HCT116 (cell line): ENCODE measurements at regions of chr22 and their contacts with region 1.

Region 1: GRCh38 chr22:29040385-29041275 is 21.0 kb downstream of the C22orf31 start:
- DNase-seq: peak; percentile 73
- ATAC-seq: peak; percentile 88
- H3K4me3 ChIP-seq: no peak overlapping the region
- H3K27ac ChIP-seq: no peak overlapping the region
- H3K4me1 ChIP-seq: peaks cover 25 to 34% of the 10 kb centered on the region in 2 experiments
- H3K27me3 ChIP-seq: no peaks in the 10 kb centered on the region
- CTCF ChIP-seq: peak; percentile 84 to 99 (median 96)
- POLR2A ChIP-seq: no peak
- RAD21 ChIP-seq: peak; percentile 91

Region 2: GRCh38 chr22:28600546-28601143 is 440.0 kb before region 1 on chr22:
- CTCF ChIA-PET with region 1: interaction called, 29 read pairs
- POLR2A ChIA-PET with region 1: no interaction called
- RAD21 ChIA-PET with region 1: interaction called in 1 of 2 experiments, 4 read pairs
- intact Hi-C with region 1: loop called (anchors 2 kb)
- DNase-seq: peak; percentile 24
- ATAC-seq: peak; percentile 58
- H3K4me3 ChIP-seq: no peak overlapping the region
- H3K27ac ChIP-seq: no peak overlapping the region
- H3K4me1 ChIP-seq: no peaks in the 10 kb centered on the region
- H3K27me3 ChIP-seq: no peaks in the 10 kb centered on the region
- CTCF ChIP-seq: peak; percentile 12 to 53 (median 52); a peak in 4 of 6 replicates
- POLR2A ChIP-seq: no peak
- RAD21 ChIP-seq: peak; percentile 74

Region 3: DNA sequence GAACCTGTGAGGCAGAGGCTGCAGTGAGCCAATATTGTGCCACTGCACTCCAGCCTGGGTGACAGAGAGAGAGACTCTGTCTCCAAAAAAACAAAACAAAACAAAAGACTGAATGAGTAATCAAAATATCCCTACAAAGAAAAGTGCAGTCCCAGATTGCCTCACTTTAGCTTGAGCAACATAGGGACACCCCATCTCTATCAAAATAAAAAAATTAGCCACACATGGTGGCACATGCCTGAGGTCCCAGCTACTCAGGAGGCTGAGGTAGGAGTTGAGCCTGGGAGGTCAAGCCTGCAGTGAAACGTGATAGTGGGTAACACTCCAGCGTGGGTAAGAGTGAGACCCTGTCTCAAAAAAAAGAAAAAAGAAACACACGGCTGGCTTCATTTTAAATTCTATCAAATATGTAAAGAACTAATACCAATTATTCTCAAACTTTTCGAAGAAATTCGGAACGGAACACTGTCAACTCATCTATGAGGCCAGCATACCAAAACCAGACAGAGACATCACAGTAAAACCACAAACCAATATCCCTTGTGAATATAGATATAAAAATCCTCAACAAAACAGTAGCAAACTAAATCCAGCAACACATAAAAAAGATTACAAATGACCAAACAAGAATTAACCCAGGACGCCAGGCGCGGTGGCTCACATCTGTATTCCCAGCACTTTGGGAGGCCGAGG is 311.9 kb before region 1 on chr22:
- CTCF ChIA-PET with region 1: no interaction called
- POLR2A ChIA-PET with region 1: no interaction called
- RAD21 ChIA-PET with region 1: no interaction called
- intact Hi-C with region 1: no loop called
- DNase-seq: no peak
- ATAC-seq: no peak
- H3K4me3 ChIP-seq: no peak overlapping the region
- H3K27ac ChIP-seq: no peak overlapping the region
- H3K4me1 ChIP-seq: no peaks in the 10 kb centered on the region
- H3K27me3 ChIP-seq: no peaks in the 10 kb centered on the region
- CTCF ChIP-seq: no peak
- POLR2A ChIP-seq: no peak
- RAD21 ChIP-seq: no peak

Region 4: GRCh38 chr22:28800308-28801077 is 240.1 kb before region 1 on chr22 and contains the start of gene XBP1:
- CTCF ChIA-PET with region 1: interaction called, 14 read pairs
- POLR2A ChIA-PET with region 1: interaction called, 10 read pairs
- RAD21 ChIA-PET with region 1: interaction called in 1 of 2 experiments, 3 read pairs
- intact Hi-C with region 1: no loop called
- DNase-seq: peak; percentile 79
- ATAC-seq: peak; percentile 97
- H3K4me3 ChIP-seq: peak within 1 kb of the TSS; percentile 91 to 95
- H3K27ac ChIP-seq: peak within 1 kb of the TSS; percentile 82
- H3K4me1 ChIP-seq: peaks cover 7 to 20% of the 10 kb centered on the region in 2 experiments
- H3K27me3 ChIP-seq: no peaks in the 10 kb centered on the region
- CTCF ChIP-seq: no peak
- POLR2A ChIP-seq: peak; percentile 96
- RAD21 ChIP-seq: no peak
- total RNA-seq, gene XBP1: 81.3 TPM

Region 5: DNA sequence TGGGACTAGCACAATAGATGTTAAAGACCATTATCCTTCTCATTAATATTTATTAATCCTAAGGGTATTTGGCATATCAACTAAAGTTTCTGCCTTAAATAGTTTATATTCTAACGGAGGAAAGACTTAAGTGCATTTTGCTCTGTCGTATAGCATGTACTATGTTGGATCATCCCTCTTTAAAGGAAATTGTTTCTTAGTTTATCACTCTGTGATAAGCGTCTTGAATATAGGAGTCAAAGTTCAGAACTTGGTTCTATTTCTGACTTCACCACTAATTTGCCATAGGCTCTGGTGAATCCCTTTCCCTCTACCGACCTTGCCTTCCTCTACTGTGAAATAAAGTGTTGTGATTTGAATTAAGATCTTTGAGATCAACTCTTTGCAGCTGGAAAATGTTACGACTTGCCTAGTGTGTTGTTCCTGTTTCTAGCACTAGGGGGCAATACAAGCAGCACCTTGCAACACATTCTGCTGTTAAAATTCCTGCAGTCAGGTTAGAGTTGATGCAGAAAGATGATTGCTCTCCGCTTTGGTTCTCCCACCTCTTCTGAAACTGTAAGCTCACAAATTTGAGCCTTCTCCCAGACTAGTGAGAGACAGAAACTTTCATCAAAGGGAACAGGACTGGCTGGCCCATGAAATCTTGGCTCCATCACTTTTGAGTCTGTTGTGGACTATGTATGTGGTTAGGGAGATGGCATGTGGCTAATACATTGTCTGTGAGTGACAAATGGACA is 185.1 kb before region 1 on chr22:
- CTCF ChIA-PET with region 1: interaction called, 80 read pairs
- POLR2A ChIA-PET with region 1: no interaction called
- RAD21 ChIA-PET with region 1: interaction called, 21 to 22 read pairs
- intact Hi-C with region 1: loop called (anchors 1 kb)
- DNase-seq: peak; percentile 73
- ATAC-seq: peak; percentile 80
- H3K4me3 ChIP-seq: no peak overlapping the region
- H3K27ac ChIP-seq: no peak overlapping the region
- H3K4me1 ChIP-seq: peaks cover 22 to 23% of the 10 kb centered on the region in 2 experiments
- H3K27me3 ChIP-seq: no peaks in the 10 kb centered on the region
- CTCF ChIP-seq: peak; percentile 82 to 93 (median 90)
- POLR2A ChIP-seq: no peak
- RAD21 ChIP-seq: peak; percentile 92

Region 6: DNA sequence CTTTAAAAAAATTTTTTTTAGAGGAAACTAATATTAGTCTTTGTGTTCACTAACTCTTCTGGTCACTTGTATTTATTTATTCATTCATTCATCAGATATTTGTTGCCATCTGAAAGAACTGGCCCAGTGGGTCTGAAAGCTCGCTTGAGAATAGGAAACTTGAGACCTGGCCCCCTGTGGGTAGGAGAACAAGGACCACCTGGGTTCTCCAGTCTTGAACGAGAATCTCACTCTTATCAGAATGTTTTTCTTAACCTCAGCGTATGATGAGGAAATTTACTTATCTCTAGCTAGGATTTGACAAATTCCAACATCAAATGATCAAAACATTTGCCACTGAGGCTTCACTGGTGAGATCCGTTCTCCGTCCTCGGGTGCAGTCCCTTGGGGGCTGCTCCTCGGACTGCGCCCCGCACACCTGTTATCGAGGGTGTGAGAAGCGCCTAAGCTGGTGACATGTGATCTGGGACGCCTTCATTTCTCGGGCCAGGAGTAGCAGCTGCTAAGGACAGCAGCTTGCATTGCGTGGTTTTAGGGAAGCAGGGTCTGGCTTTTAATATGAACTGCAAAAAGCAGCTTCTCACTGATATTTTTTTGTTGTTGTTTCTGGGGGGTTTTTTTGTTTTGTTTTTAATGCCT is 14.7 kb after region 1 on chr22:
- CTCF ChIA-PET with region 1: interaction called, 13 read pairs
- POLR2A ChIA-PET with region 1: interaction called, 3 read pairs
- RAD21 ChIA-PET with region 1: no interaction called
- intact Hi-C with region 1: no loop called
- DNase-seq: no peak
- ATAC-seq: no peak
- H3K4me3 ChIP-seq: no peak overlapping the region
- H3K27ac ChIP-seq: no peak overlapping the region
- H3K4me1 ChIP-seq: no peaks in the 10 kb centered on the region
- H3K27me3 ChIP-seq: no peaks in the 10 kb centered on the region
- CTCF ChIP-seq: no peak
- POLR2A ChIP-seq: no peak
- RAD21 ChIP-seq: no peak

Region 7: GRCh38 chr22:29172216-29172615 is 131.6 kb after region 1 on chr22:
- CTCF ChIA-PET with region 1: no interaction called
- POLR2A ChIA-PET with region 1: no interaction called
- RAD21 ChIA-PET with region 1: no interaction called
- intact Hi-C with region 1: no loop called
- DNase-seq: no peak
- ATAC-seq: no peak
- H3K4me3 ChIP-seq: no peak overlapping the region
- H3K27ac ChIP-seq: no peak overlapping the region
- H3K4me1 ChIP-seq: no peaks in the 10 kb centered on the region
- H3K27me3 ChIP-seq: no peaks in the 10 kb centered on the region
- CTCF ChIP-seq: no peak
- POLR2A ChIP-seq: no peak
- RAD21 ChIP-seq: no peak

Region 8: GRCh38 chr22:29245637-29246385 is 205.2 kb after region 1 on chr22:
- CTCF ChIA-PET with region 1: interaction called, 8 read pairs
- POLR2A ChIA-PET with region 1: no interaction called
- RAD21 ChIA-PET with region 1: interaction called, 5 read pairs
- intact Hi-C with region 1: loop called (anchors 10 kb)
- DNase-seq: peak; percentile 34
- ATAC-seq: peak; percentile 100
- H3K4me3 ChIP-seq: no peak overlapping the region
- H3K27ac ChIP-seq: no peak overlapping the region
- H3K4me1 ChIP-seq: no peaks in the 10 kb centered on the region
- H3K27me3 ChIP-seq: no peaks in the 10 kb centered on the region
- CTCF ChIP-seq: peak; percentile 59 to 99 (median 94)
- POLR2A ChIP-seq: no peak
- RAD21 ChIP-seq: peak; percentile 85